Psoas muscle (tissue), 8 donors: ENCODE measurements at regions of chr1 and their contacts with region 1.

Region 1: DNA sequence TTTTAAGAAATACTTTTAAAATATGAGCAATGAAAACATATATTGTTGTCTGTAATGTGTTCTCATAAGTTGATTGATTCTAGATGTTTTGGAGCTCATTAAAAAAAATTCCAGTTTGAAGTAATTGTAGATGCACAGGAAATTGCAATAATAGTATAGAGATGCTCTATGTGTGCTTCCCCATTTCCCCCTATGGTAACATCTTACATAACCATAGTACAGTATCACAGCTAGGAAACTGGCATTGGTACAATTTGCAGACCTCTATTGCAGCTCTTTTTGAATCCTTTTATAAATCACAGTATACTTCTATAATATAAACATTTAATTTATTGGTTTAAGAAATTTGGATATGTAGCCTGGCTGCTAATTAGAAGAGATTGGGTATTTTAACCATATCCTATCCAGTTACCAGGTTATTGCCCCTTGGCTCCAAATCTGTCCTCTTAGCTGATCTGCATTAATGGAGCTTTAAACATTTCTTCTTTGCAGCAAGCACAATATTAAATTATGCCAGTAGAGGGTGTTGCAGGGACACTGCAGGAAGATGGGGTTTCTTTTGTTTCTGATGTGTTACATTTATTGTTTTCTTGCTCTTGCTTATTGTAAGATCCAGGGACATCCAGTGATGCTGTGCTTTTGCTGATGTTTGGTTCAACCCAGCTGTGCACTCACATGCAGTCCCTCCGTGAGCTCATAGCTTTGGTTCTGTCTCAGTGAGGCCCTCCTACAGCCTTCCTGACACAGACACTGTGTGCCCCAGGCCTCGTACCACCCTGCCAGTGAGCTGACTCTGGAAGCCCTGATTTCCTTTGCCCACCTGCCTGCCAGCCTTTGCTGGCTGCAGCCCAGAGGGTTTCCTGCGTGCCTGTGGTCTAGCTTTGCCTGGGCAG is 103.3 kb downstream of the RABGAP1L start:
- DNase-seq: no peak
- ATAC-seq: no peak
- H3K4me3 ChIP-seq: no peak overlapping the region
- H3K27ac ChIP-seq: no peak overlapping the region
- H3K4me1 ChIP-seq: no peaks in the 10 kb centered on the region
- H3K27me3 ChIP-seq: no peaks in the 10 kb centered on the region
- CTCF ChIP-seq: peak; percentile 50

Region 2: GRCh38 chr1:173914366-173914871 is 348.2 kb before region 1 on chr1:
- intact Hi-C with region 1: no loop called
- DNase-seq: no peak
- ATAC-seq: no peak
- H3K4me3 ChIP-seq: no peak overlapping the region
- H3K27ac ChIP-seq: no peak overlapping the region
- H3K4me1 ChIP-seq: no peaks in the 10 kb centered on the region
- H3K27me3 ChIP-seq: no peaks in the 10 kb centered on the region
- CTCF ChIP-seq: no peak

Region 3: GRCh38 chr1:174743654-174744561 is 481.3 kb after region 1 on chr1:
- intact Hi-C with region 1: loop called (anchors 1 to 2 kb)
- DNase-seq: no peak
- ATAC-seq: peak in 1 of 4 donors; percentile 49
- H3K4me3 ChIP-seq: no peak overlapping the region
- H3K27ac ChIP-seq: no peak overlapping the region
- H3K4me1 ChIP-seq: no peaks in the 10 kb centered on the region
- H3K27me3 ChIP-seq: no peaks in the 10 kb centered on the region
- CTCF ChIP-seq: peak; percentile 64

Region 4: DNA sequence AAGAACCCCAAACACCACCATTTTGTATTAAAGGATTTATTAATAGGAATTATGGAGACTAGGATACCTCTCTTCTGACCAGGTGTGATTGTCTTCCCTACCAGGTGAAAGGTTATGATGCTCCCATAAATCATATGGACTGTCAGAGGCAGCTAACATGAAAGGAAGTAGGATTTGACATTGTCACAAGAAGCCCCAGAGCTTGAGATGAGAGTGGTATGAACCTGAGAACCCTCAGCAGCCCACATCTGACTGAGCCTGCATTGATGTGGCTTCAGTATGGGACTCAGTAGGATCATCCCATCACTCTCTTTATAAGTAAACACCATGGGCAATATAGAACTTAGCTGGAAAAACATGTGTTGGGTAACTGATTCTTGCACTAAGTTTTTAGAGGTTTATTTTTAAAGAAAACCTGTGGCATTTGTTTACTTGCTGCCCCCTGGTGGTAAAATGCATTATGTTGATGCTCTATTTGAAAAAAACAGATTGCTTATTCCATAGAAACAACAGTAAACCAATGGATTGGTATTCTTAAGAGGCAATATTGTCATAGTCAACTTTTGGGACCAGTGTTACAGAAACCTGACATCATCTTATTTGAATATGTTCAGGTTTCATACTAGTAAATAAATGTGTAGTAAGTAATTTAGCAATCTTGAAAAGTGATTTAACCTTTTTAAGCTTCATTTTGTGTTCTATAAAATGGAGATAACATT is 720.5 kb after region 1 on chr1:
- intact Hi-C with region 1: loop called in 1 of 2 experiments (anchors 10 kb)
- DNase-seq: no peak
- ATAC-seq: no peak
- H3K4me3 ChIP-seq: no peak overlapping the region
- H3K27ac ChIP-seq: no peak overlapping the region
- H3K4me1 ChIP-seq: no peaks in the 10 kb centered on the region
- H3K27me3 ChIP-seq: no peaks in the 10 kb centered on the region
- CTCF ChIP-seq: peak; percentile 67